Activated B cell treated with CpG ODN at 0.5 μM for 24 hours (primary cell): ENCODE measurements at regions of chr10 and their contacts with region 1.

Region 1: GRCh38 chr10:26621889-26622711 is 75.4 kb upstream of the PDSS1 start:
- DNase-seq: no peak
- ATAC-seq: peak; percentile 64
- H3K4me3 Mint-ChIP-seq: peak overlapping the region; percentile 19
- H3K27ac Mint-ChIP-seq: no peak overlapping the region
- H3K4me1 Mint-ChIP-seq: peaks cover 5% of the 10 kb centered on the region
- H3K27me3 Mint-ChIP-seq: peaks cover 12% of the 10 kb centered on the region
- CTCF ChIP-seq: no peak

Region 2: DNA sequence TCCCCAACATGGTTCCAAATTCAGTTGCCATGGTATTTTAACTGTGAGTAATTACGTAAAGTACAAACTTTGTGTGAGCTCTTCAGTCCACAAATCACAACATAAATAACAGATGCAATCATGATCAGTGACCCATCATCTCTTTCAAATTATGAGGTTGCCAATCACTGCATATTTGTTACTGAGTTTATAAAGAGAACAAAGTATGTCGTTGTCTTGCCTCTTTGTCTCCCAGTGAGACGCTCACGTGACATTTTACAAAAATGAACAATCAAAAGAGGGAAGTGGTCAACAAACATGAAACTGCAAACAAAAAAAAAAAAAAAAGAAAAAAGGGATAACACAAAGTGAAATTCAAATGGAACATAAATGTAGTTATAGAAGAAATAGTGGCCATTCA is 47.3 kb before region 1 on chr10:
- CTCF ChIA-PET with region 1: no interaction called
- POLR2A ChIA-PET with region 1: no interaction called
- intact Hi-C with region 1: loop called (anchors 1 kb)
- DNase-seq: no peak
- ATAC-seq: peak; percentile 78
- H3K4me3 Mint-ChIP-seq: peak overlapping the region; percentile 51
- H3K27ac Mint-ChIP-seq: peak overlapping the region; percentile 84
- H3K4me1 Mint-ChIP-seq: peaks cover 29% of the 10 kb centered on the region
- H3K27me3 Mint-ChIP-seq: no peaks in the 10 kb centered on the region
- CTCF ChIP-seq: no peak

Region 3: DNA sequence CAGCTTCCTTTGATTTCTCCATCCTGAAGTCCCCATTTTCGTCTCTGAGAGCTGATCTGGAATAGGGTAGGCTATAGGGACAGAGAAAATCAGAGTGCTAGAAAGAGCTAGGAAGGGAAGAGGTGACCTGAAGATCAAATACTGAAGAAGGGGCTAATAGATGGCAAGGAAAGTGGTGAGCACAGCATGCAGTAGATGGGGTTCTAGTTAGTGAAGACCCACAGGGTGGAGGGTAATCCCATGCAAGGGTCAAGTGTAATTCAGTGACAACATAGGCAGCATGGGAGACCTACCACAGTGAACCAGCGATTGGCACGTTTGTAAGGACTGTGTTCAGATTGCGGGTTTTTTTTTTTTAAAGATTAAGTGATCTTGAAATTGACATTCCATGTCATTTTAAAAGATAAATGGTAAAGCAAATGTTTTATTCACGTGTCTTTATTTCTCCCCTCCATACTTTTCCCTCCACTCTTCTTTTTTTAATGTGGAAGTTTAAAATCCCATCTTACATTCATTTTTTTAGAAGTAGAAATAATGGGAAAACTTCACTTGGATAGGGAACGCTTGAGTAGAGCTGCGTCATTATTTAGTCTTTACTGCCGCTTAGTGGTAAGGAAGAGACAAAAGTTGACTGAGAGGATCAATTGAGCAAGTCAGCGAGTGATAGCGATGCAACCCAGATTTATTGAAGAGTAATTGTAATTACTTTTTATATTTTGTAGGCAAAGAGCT is 259.7 kb after region 1 on chr10:
- CTCF ChIA-PET with region 1: no interaction called
- POLR2A ChIA-PET with region 1: no interaction called
- intact Hi-C with region 1: no loop called
- DNase-seq: no peak
- ATAC-seq: peak; percentile 75
- H3K4me3 Mint-ChIP-seq: no peak overlapping the region
- H3K27ac Mint-ChIP-seq: no peak overlapping the region
- H3K4me1 Mint-ChIP-seq: peaks cover 2% of the 10 kb centered on the region
- H3K27me3 Mint-ChIP-seq: peaks cover 11% of the 10 kb centered on the region
- CTCF ChIP-seq: no peak